Left cardiac atrium (tissue), 4 donors: ENCODE measurements at regions of chrX and their contacts with region 1.

Region 1: GRCh38 chrX:119729408-119730201 is 28.8 kb upstream of the SOWAHD start:
- DNase-seq: peak; percentile 39
- ATAC-seq: peak; percentile 47 to 49

Region 2: GRCh38 chrX:119606280-119607015 is 123.2 kb before region 1 on chrX and contains the start of gene NKRF:
- intact Hi-C with region 1: loop called (anchors 5 to 10 kb)
- DNase-seq: peak; percentile 94
- ATAC-seq: peak; percentile 94 to 96
- total RNA-seq, gene NKRF: 4.0 to 6.1 TPM

Region 3: GRCh38 chrX:119617517-119618164 is 112.0 kb before region 1 on chrX:
- intact Hi-C with region 1: loop called in 1 of 2 experiments (anchors 10 kb)
- DNase-seq: no peak
- ATAC-seq: no peak

Region 4: DNA sequence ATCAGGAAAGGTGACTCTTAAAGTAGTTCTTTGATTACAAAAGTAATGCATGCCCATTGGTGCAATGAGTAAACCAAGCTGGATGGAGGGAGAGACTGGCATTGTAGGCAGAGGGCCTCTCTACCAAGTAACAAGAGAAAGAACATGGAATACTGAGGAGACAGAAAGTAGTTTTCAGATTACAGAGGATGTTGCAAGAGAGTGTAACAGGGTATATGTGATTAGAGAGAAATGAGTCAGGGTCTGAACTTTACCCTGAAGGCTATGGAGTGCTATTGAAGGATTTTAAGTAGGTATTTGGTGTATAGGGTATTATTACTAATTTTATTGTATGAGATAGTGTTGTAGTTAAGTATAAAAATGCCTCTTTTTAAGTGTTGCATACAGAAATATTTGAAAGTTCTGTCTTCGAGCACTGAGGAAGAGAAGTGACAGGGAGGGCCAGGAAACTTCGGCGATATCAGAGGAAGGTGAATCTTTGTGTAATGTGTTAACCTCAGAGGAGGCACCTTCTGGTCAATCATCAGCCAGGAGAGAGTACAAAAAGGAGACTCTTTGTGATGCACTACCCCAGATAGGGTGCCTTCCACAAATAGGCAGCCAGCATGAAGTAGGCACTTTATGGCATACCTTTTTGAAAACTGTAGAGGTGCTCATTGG is 205.7 kb after region 1 on chrX:
- intact Hi-C with region 1: no loop called
- DNase-seq: no peak
- ATAC-seq: no peak

Region 5: DNA sequence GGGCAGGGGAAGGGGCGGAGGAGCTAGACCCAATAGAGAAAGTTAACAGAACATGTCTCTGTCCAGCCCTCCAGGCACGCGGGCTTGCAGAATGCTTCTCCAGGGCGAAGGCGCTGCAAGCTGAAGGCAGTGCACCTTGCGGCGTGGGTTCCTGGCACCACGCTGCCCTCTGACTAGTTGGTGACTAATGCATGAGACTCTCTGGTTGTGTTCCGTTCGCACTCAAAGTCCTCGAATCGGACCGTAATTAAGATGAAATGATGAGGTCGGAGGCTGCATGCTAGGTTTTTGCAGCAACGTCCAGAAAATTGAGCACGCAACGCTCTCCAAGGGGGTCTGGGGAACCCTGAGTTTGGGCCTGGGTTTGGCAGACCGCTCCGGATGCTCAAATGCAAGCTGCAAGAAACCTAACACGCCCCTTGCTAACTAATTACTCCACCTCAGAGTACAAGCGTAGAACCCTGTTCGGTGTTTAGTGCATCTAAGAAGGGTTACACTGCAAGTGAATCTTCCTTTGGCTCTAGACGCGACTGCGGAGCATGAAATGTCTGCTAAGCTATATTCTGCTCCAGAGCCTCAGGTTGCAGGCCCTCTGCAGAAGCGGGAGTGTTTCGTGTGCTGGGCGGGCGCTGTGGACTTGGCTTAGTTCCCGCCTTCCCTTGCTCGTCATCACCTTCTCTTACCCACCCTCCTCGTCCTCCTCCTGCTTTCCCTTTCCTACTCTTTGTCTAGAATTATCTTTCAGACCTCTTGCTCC is 271.1 kb after region 1 on chrX:
- intact Hi-C with region 1: no loop called
- DNase-seq: no peak
- ATAC-seq: peak; percentile 34 to 73